Activated naive CD4-positive, alpha-beta T cell treated with anti-CD3 and anti-CD28 coated beads for 36 hours (primary cell): ENCODE measurements at regions of chr7 and their contacts with region 1.

Region 1: DNA sequence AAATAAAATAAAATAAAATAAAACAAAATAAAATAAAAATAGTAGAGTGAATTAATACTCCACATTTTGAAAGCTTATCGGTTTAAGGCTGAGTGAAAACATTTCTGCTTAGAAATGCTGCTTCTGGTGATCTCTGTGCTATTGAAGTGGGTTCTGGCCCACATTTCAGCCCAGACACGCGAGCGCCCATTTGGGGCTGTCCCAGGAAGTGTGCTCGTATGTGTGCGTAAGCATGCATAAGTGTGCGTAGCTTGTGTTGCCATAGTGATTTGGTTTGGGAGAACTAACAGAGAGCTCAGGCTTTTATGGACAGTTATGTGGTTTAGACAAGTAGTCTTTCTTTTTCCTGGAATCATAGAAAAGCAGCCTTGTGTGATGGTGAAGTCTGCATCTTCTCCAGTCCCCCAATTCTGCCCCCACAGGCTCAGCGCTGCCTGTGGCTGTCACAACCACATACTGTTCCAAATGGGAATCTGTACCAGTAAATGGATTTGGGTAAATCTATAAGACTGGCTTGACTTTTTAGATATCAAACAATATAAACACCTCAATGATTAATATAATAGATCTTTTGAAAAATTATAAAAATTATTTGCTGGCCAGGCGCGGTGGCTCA is 29.8 kb upstream of the PURB start:
- DNase-seq: peak; percentile 88
- H3K4me3 Mint-ChIP-seq: no peak overlapping the region
- H3K27ac Mint-ChIP-seq: peak overlapping the region; percentile 83
- H3K4me1 Mint-ChIP-seq: peaks cover 17% of the 10 kb centered on the region
- H3K27me3 Mint-ChIP-seq: no peaks in the 10 kb centered on the region

Region 2: GRCh38 chr7:44858161-44858560 is 56.9 kb before region 1 on chr7:
- CTCF ChIA-PET with region 1: interaction called, 34 read pairs
- intact Hi-C with region 1: loop called (anchors 1 kb)
- DNase-seq: no peak
- H3K4me3 Mint-ChIP-seq: no peak overlapping the region
- H3K27ac Mint-ChIP-seq: no peak overlapping the region
- H3K4me1 Mint-ChIP-seq: peaks cover 23% of the 10 kb centered on the region
- H3K27me3 Mint-ChIP-seq: no peaks in the 10 kb centered on the region

Region 3: DNA sequence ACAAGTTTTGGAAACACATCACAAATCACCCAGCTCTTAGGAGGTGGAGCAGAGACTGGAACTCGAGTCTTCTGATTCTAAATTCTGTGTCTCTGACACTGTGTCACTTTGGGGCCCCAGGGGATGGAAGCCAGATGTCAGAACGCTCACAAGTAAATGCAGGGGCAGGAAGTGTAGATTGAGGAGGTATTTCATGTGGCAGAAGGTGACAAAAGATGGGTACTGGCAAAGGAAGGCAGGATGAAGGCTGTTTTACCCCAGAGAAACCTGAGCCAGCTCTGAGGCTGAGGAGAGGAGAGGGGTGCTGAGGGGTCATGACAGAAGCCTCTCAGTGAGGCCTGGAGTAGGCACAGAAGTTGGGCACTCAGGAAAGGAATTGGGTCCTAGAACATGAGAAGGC is 23.7 kb before region 1 on chr7:
- CTCF ChIA-PET with region 1: interaction called, 7 read pairs
- intact Hi-C with region 1: loop called (anchors 1 kb)
- DNase-seq: peak; percentile 83
- H3K4me3 Mint-ChIP-seq: peak overlapping the region; percentile 4
- H3K27ac Mint-ChIP-seq: peak overlapping the region; percentile 93
- H3K4me1 Mint-ChIP-seq: peaks cover 27% of the 10 kb centered on the region
- H3K27me3 Mint-ChIP-seq: no peaks in the 10 kb centered on the region